ENCODE measurements at regions of chr20 and their contacts with region 1.

Region 1: GRCh38 chr20:3679749-3680700 is 1.8 kb downstream of the ADAM33 start:
- DNase-seq: no peak
- H3K4me3 Mint-ChIP-seq: no peak overlapping the region
- H3K27ac Mint-ChIP-seq: no peak overlapping the region
- H3K4me1 Mint-ChIP-seq: no peaks in the 10 kb centered on the region
- H3K27me3 Mint-ChIP-seq: peaks cover 38% of the 10 kb centered on the region

Region 2: GRCh38 chr20:3446779-3447178 is 233.2 kb before region 1 on chr20:
- CTCF ChIA-PET with region 1: no interaction called
- POLR2A ChIA-PET with region 1: no interaction called
- intact Hi-C with region 1: no loop called
- DNase-seq: no peak
- H3K4me3 Mint-ChIP-seq: no peak overlapping the region
- H3K27ac Mint-ChIP-seq: no peak overlapping the region
- H3K4me1 Mint-ChIP-seq: no peaks in the 10 kb centered on the region
- H3K27me3 Mint-ChIP-seq: peaks cover 2% of the 10 kb centered on the region

Region 3: GRCh38 chr20:3502878-3503277 is 177.1 kb before region 1 on chr20:
- CTCF ChIA-PET with region 1: no interaction called
- POLR2A ChIA-PET with region 1: no interaction called
- intact Hi-C with region 1: no loop called
- DNase-seq: no peak
- H3K4me3 Mint-ChIP-seq: no peak overlapping the region
- H3K27ac Mint-ChIP-seq: no peak overlapping the region
- H3K4me1 Mint-ChIP-seq: no peaks in the 10 kb centered on the region
- H3K27me3 Mint-ChIP-seq: no peaks in the 10 kb centered on the region

Region 4: GRCh38 chr20:3667434-3668037 is 12.5 kb before region 1 on chr20:
- CTCF ChIA-PET with region 1: interaction called, 15 read pairs
- POLR2A ChIA-PET with region 1: no interaction called
- intact Hi-C with region 1: no loop called
- DNase-seq: no peak
- H3K4me3 Mint-ChIP-seq: no peak overlapping the region
- H3K27ac Mint-ChIP-seq: no peak overlapping the region
- H3K4me1 Mint-ChIP-seq: peaks cover 14% of the 10 kb centered on the region
- H3K27me3 Mint-ChIP-seq: peaks cover 24% of the 10 kb centered on the region

Region 5: GRCh38 chr20:3696200-3696599 is 16.2 kb after region 1 on chr20:
- CTCF ChIA-PET with region 1: interaction called, 16 read pairs
- POLR2A ChIA-PET with region 1: no interaction called
- intact Hi-C with region 1: no loop called
- DNase-seq: no peak
- H3K4me3 Mint-ChIP-seq: no peak overlapping the region
- H3K27ac Mint-ChIP-seq: no peak overlapping the region
- H3K4me1 Mint-ChIP-seq: no peaks in the 10 kb centered on the region
- H3K27me3 Mint-ChIP-seq: no peaks in the 10 kb centered on the region

Region 6: GRCh38 chr20:3710703-3711483 is 30.9 kb after region 1 on chr20:
- CTCF ChIA-PET with region 1: interaction called, 81 read pairs
- POLR2A ChIA-PET with region 1: no interaction called
- intact Hi-C with region 1: loop called (anchors 1 kb)
- DNase-seq: peak; percentile 82
- H3K4me3 Mint-ChIP-seq: no peak overlapping the region
- H3K27ac Mint-ChIP-seq: no peak overlapping the region
- H3K4me1 Mint-ChIP-seq: no peaks in the 10 kb centered on the region
- H3K27me3 Mint-ChIP-seq: peaks cover 7% of the 10 kb centered on the region

Region 7: DNA sequence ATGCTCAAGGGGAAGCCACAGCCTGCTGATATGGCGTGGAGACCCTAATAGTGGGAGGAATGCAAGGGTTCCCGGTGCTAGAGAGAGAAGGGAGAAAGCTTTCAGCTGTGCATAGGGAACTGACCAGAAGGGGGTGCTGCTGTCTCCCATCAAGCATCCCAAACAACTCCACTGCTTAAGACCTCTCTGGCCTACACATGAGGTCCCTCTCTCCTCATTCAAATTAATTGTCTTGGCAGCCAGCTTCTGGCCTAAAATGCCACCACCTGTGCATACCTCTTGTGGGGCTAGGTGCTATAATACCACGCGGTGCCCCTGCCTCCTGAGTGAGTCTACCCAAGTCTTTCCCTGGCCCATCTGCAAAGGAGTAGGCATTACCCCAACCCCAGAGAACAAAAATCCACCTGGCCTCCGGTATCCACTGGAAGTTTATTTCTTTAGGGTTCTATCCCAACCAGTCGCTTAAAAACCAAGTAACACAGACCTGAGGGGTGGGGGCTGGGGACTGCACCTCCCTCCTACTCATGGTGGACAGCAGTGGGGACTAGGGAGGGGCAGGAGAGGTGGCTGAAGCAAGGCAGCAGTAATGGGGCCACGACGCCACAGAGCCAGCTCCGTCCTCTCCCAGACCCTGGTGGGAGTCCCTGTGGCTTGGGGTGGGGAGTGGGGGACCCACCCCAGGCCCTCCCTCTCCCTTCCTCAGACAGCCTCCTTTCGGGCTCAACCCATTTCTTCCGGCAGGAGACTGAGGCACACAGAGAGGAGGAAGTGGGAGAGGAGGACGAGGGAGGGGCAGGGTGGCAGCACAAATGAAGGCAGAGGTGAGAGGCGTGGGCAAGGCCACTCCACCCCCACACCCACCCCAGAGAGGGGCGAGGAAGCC is 73.3 kb after region 1 on chr20:
- CTCF ChIA-PET with region 1: interaction called, 23 read pairs
- POLR2A ChIA-PET with region 1: no interaction called
- intact Hi-C with region 1: no loop called
- DNase-seq: peak; percentile 75
- H3K4me3 Mint-ChIP-seq: no peak overlapping the region
- H3K27ac Mint-ChIP-seq: peak overlapping the region; percentile 58
- H3K4me1 Mint-ChIP-seq: peaks cover 6% of the 10 kb centered on the region
- H3K27me3 Mint-ChIP-seq: no peaks in the 10 kb centered on the region

Region 8: DNA sequence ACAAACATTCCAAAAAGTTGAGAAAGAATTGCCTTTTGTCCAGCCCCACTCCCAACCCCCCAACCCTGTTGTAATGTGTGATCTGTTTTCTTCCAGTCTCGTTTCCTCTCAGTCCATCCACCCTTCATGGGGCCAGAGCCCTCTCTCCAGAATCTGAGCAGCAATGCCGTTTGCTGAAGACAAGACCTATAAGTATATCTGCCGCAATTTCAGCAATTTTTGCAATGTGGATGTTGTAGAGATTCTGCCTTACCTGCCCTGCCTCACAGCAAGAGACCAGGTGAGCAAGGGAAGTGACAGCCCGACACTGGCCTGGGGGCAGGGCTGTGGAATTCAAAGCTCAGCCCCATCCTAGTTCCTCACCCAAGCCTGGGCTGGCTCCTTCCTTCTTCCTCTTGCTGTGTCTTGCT is 174.4 kb after region 1 on chr20:
- CTCF ChIA-PET with region 1: interaction called, 10 read pairs
- POLR2A ChIA-PET with region 1: no interaction called
- intact Hi-C with region 1: no loop called
- DNase-seq: no peak
- H3K4me3 Mint-ChIP-seq: no peak overlapping the region
- H3K27ac Mint-ChIP-seq: peak overlapping the region; percentile 23
- H3K4me1 Mint-ChIP-seq: peaks cover 2% of the 10 kb centered on the region
- H3K27me3 Mint-ChIP-seq: no peaks in the 10 kb centered on the region

Measured in activated CD4-positive, alpha-beta memory T cell treated with anti-CD3 and anti-CD28 coated beads for 36 hours (primary cell).